Sciatic nerve (tissue), 2 donors: ENCODE measurements at regions of chr9 and their contacts with region 1.

Region 1: DNA sequence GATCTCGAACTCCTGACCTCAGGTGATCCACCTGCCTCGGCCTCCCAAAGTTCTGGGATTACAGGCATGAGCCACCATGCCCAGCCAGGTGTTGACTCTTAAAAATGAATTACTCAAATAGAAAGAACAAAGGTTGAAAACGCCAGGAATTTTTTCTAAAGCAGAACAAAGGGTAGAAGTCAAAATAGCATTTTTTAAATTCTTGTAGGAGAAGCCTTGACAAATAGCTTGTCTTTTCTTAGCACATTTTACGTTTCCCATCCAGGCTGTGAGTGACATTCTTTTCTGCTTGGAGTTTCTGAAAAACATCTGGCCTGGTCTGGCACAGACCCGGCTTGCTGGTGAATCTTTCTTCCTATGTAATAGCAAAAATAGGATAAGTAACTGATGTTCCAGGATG is 169.4 kb upstream of the ZNF462 start:
- DNase-seq: no peak
- ATAC-seq: no peak

Region 2: DNA sequence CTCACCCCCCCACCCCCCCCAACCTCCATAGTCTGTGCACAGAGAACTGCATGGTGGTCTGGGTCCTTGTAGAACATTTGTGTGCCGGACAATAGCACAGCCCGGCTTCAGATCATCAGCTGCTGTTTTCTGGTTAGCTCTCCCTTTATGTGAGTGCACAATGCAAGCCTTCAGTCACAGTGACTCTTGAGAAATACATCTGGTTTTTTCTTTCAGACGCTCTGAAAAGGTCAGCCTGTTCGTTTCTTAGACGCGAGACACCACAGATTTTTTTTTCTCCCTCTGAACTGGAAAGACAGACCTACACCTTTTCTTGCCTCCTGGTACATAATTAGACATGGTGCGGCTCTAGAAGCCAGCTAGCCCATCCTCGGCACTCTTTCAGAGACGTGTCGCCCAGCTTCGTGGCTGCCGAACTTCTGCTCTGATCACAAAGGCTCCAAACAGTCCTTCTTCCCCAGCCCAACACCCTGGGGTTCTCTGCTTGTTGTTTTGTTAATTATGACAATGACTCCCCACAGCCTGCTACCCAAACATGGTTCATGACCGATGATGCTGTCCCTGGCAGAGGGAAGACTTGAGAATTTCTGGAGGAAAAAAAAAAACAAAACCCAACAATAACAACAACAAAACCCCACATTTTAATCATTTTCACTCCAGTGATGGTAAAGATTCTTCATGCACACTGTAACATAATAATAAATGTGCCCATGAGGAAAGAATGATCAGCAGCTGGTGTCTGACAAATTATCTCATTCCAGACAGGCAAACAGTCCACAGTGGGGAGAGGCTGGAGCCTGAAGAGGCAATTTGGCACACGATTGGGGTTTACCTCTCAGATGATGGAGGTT is 72.0 kb before region 1 on chr9:
- intact Hi-C with region 1: loop called (anchors 5 kb)
- DNase-seq: no peak
- ATAC-seq: peak; percentile 87

Region 3: GRCh38 chr9:107190061-107190935 is 496.7 kb after region 1 on chr9:
- intact Hi-C with region 1: no loop called
- DNase-seq: no peak
- ATAC-seq: no peak